ENCODE measurements at regions of chr14 and their contacts with region 1.

Region 1: DNA sequence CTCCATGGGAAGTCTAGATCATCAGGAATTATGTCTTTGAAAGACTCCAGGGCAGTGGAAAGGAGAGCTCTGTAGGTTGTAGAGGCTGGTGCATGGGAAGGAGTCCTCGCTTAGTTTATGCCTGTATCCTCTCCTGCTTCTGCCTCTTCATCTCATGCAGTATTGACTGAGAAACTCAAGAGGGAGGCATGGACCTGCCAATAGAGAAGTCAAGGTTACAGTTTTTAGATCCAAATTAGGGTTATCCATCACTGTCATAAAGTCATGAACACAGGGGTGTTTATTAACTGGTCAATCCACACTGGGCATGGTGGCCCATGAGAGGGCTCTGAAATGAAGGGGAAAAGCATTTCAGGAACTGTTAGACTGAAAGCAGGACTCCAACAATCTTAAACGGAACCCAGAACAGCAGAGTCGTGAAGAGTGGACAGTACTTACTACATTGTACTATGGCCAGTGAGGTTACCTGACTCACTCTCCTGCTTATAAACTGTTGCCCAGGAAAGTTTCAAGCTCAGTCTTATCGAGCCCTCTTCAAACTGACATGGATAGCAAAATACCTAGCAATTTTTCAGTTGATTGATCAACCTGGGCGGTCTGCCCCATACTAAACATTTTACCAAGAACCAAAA is 30.1 kb upstream of the DHRS7 start:
- DNase-seq: no peak
- ATAC-seq: peak in 1 of 2 donors; percentile 38

Region 2: GRCh38 chr14:60327447-60328331 is 132.4 kb after region 1 on chr14:
- intact Hi-C with region 1: loop called in 1 of 2 experiments (anchors 10 kb)
- DNase-seq: peak; percentile 31
- ATAC-seq: peak; percentile 62 to 86

Region 3: DNA sequence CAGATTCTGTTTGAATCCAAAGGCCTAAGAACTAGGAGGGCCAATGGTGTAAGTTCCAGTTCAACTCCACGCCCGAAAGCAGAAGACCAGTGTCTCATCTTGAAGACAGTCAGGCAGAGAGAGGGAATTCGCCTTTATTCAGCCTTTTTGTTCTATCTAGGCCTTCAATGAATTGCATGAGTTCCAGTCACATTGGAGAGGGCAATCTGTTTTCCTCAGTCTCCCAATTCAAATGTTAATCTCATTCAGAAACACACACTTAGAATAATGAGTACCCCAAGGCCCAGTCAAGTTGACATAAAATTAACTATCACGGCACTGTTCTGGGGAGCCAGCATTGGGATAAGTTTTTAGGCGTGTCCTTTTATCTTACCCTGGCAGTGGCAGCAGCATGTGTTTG is 224.8 kb after region 1 on chr14:
- intact Hi-C with region 1: no loop called
- DNase-seq: no peak
- ATAC-seq: no peak

Measured in left cardiac atrium (tissue), 4 donors.